Activated T-helper 2 cell treated with anti-CD3 and anti-CD28 coated beads, Interferon-gamma antibody, Interleukin-2, Interleukin-4, amounts not matched to agents 10 μg/mL and 5 μg/mL and 100 μg/mL, durations not matched to agents 14 hours and 24 hours and 36 hours (primary cell): ENCODE measurements at regions of chr14 and their contacts with region 1.

Region 1: DNA sequence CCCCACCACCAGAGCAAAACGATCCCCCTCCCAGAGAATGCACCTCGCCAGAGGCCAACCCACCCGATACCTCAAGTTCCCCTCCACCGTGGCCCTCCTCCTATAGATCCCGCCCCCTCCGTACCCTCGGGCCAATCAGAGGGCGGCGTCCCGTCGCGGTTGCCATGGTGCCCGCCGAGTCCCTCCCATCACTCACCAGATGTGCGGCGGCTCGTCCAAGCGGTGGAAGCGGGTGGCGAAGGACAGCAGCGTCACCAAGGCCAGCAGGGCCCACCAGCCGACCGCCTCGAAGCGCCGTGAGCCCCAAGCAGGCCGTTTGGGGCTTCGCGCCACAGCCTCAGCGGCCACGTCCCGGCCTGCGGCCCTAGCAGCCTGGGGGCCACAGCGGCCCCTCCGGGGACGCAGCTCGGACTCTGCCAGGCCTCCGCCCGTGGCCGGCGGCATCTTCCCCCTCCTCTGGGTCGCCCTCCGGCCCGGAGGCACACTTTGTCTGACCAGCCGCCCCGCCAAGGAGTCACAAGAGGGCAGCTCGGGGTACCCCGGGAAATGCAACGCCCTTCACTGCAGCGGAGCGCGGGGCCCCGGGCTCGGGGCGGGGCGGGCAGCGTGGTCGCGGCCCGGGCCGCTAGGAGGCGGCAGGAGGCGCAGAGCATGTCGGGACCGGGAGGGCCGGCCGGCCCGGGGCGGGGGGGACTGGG is at the start of gene POMT2:
- DNase-seq: peak; percentile 90
- H3K4me3 Mint-ChIP-seq: peak within 1 kb of the TSS; percentile 98
- H3K27ac Mint-ChIP-seq: peak within 1 kb of the TSS; percentile 100
- H3K4me1 Mint-ChIP-seq: peaks cover 20% of the 10 kb centered on the region
- H3K27me3 Mint-ChIP-seq: no peaks in the 10 kb centered on the region
- total RNA-seq, gene POMT2: 23.4 and 27.7 TPM in 2 replicates

Region 2: DNA sequence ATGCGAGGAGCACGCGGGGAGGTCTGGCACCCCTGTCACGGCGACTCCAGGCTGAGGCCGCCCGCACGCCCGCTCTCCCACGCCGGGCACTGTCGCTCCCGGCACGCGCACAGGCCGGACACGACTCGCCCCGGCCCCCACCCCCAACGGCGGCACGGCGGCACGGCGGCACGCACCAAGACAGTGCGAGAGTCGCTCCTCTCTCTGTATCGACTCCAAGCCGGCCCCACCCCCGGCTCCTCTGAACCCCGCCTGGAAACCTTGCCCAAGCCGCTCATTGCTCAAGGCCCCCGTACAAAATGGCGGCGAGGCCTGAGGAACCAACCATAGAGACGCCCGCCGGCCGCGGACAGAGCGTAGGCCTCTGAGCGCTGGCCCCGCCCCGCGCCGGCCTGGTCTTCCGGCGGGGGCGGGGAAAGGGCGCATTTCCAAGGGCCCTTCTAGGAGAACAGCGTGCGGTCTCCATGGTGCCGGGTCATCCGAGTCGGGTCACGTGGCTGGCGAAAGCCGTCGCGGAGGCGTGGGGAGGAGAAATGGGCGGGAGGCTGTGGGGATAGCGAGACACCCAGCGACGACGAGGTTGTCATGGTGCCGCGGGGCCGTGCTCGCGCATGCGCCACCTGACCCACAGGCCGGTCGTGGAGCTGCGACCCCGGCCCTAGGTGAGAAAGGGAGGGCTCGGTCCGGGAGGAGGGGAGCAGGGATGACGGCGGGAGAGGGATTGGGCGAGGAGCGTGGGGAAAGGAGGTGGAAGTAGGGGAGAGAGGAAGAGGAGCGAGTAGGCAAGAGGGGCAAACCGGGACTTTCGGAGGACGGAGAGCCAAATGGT is 222.5 kb before region 1 on chr14 and contains the start of gene CIPC:
- intact Hi-C with region 1: loop called (anchors 1 kb)
- DNase-seq: peak; percentile 100
- H3K4me3 Mint-ChIP-seq: peak within 1 kb of the TSS; percentile 91
- H3K27ac Mint-ChIP-seq: peak within 1 kb of the TSS; percentile 97
- H3K4me1 Mint-ChIP-seq: peaks cover 24% of the 10 kb centered on the region
- H3K27me3 Mint-ChIP-seq: no peaks in the 10 kb centered on the region
- total RNA-seq, gene CIPC: 10.9 and 11.3 TPM in 2 replicates

Region 3: GRCh38 chr14:77301103-77301502 is 19.3 kb before region 1 on chr14:
- intact Hi-C with region 1: loop called (anchors 1 kb)
- DNase-seq: peak; percentile 43
- H3K4me3 Mint-ChIP-seq: no peak overlapping the region
- H3K27ac Mint-ChIP-seq: no peak overlapping the region
- H3K4me1 Mint-ChIP-seq: peaks cover 25% of the 10 kb centered on the region
- H3K27me3 Mint-ChIP-seq: peaks cover 1% of the 10 kb centered on the region

Region 4: DNA sequence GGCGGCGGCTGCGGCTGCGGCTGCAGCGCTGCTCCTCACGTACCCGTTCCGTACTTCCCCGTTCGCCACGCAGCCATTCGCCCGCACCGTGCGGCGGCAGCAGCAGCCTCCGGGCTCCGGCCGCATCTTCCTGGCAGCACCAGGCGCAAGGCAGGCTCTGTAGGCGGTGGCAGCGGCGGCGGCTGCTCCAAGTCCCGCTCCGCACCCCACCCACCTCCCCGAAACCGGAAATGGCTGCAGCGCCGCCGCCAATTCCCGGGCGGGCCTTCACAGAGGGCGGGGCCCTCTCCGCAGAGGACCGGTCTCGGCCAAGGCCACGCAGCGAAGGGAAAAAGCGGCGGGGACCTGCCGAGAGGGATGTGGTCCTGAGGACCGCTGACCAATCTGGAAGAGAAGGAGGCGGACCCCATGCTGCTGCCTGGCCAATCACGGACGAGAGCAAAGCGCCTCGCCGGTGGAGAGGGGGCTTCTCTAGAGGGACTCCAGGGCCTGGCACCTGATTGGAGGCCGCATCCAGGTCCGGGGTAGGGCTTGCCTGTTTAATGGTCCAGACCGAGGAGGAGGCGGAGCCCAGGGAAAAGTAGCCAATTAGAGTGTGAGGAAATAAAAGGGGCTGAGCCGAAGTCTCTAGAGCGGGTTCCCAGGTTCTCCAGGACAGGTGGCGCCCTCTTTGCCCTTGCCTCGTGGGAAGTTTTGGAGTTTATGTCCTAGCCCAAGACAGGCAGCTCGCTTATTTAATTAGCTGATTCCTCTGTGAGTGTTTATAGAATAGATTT is 296.3 kb after region 1 on chr14 and contains the start of gene SPTLC2:
- intact Hi-C with region 1: loop called (anchors 2 kb)
- DNase-seq: peak; percentile 96
- H3K4me3 Mint-ChIP-seq: peak within 1 kb of the TSS; percentile 93
- H3K27ac Mint-ChIP-seq: peak within 1 kb of the TSS; percentile 92
- H3K4me1 Mint-ChIP-seq: peaks cover 35% of the 10 kb centered on the region
- H3K27me3 Mint-ChIP-seq: no peaks in the 10 kb centered on the region
- total RNA-seq, gene SPTLC2: 26.6 and 29.6 TPM in 2 replicates

Region 5: GRCh38 chr14:77760381-77761246 is 440.2 kb after region 1 on chr14 and contains the start of gene SNW1:
- intact Hi-C with region 1: loop called (anchors 1 kb)
- DNase-seq: peak; percentile 90
- H3K4me3 Mint-ChIP-seq: peak within 1 kb of the TSS; percentile 97
- H3K27ac Mint-ChIP-seq: peak within 1 kb of the TSS; percentile 97
- H3K4me1 Mint-ChIP-seq: peaks cover 28% of the 10 kb centered on the region
- H3K27me3 Mint-ChIP-seq: peaks cover 4% of the 10 kb centered on the region
- total RNA-seq, gene SNW1: 101 and 114 TPM in 2 replicates